ENCODE measurements at regions of chr6 and their contacts with region 1.

Region 1: GRCh38 chr6:26065952-26066380 is 21.3 kb upstream of the HFE start:
- DNase-seq: peak; percentile 76
- ATAC-seq: peak; percentile 91
- H3K4me3 Mint-ChIP-seq: no peak overlapping the region
- H3K27ac Mint-ChIP-seq: no peak overlapping the region
- H3K4me1 Mint-ChIP-seq: peaks cover 15% of the 10 kb centered on the region
- H3K27me3 Mint-ChIP-seq: peaks cover 26% of the 10 kb centered on the region

Region 2: DNA sequence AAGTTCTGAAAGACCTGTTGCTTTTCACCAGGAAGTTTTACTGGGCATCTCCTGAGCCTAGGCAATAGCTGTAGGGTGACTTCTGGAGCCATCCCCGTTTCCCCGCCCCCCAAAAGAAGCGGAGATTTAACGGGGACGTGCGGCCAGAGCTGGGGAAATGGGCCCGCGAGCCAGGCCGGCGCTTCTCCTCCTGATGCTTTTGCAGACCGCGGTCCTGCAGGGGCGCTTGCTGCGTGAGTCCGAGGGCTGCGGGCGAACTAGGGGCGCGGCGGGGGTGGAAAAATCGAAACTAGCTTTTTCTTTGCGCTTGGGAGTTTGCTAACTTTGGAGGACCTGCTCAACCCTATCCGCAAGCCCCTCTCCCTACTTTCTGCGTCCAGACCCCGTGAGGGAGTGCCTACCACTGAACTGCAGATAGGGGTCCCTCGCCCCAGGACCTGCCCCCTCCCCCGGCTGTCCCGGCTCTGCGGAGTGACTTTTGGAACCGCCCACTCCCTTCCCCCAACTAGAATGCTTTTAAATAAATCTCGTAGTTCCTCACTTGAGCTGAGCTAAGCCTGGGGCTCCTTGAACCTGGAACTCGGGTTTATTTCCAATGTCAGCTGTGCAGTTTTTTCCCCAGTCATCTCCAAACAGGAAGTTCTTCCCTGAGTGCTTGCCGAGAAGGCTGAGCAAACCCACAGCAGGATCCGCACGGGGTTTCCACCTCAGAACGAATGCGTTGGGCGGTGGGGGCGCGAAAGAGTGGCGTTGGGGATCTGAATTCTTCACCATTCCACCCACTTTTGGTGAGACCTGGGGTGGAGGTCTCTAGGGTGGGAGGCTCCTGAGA is 21.5 kb after region 1 on chr6 and contains the start of gene HFE:
- CTCF ChIA-PET with region 1: interaction called, 741 read pairs
- POLR2A ChIA-PET with region 1: interaction called, 6 read pairs
- DNase-seq: peak; percentile 50
- ATAC-seq: peak; percentile 48
- H3K4me3 Mint-ChIP-seq: peak within 1 kb of the TSS; percentile 80
- H3K27ac Mint-ChIP-seq: peak within 1 kb of the TSS; percentile 70
- H3K4me1 Mint-ChIP-seq: peaks cover 60% of the 10 kb centered on the region
- H3K27me3 Mint-ChIP-seq: peaks cover 1% of the 10 kb centered on the region
- total RNA-seq, gene HFE: 4.3 TPM

Region 3: DNA sequence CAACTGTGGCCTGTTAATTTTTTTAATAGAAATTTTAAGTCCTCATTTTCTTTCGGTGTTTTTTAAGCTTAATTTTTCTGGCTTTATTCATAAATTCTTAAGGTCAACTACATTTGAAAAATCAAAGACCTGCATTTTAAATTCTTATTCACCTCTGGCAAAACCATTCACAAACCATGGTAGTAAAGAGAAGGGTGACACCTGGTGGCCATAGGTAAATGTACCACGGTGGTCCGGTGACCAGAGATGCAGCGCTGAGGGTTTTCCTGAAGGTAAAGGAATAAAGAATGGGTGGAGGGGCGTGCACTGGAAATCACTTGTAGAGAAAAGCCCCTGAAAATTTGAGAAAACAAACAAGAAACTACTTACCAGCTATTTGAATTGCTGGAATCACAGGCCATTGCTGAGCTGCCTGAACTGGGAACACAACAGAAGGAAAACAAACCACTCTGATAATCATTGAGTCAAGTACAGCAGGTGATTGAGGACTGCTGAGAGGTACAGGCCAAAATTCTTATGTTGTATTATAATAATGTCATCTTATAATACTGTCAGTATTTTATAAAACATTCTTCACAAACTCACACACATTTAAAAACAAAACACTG is 31.4 kb after region 1 on chr6:
- CTCF ChIA-PET with region 1: interaction called, 741 read pairs
- POLR2A ChIA-PET with region 1: interaction called, 69 read pairs
- DNase-seq: peak; percentile 78
- ATAC-seq: peak; percentile 85
- H3K4me3 Mint-ChIP-seq: no peak overlapping the region
- H3K27ac Mint-ChIP-seq: no peak overlapping the region
- H3K4me1 Mint-ChIP-seq: peaks cover 16% of the 10 kb centered on the region
- H3K27me3 Mint-ChIP-seq: peaks cover 9% of the 10 kb centered on the region